Dorsolateral prefrontal cortex (tissue), 120 donors: ENCODE measurements at regions of chr10 and their contacts with region 1.

Region 1: DNA sequence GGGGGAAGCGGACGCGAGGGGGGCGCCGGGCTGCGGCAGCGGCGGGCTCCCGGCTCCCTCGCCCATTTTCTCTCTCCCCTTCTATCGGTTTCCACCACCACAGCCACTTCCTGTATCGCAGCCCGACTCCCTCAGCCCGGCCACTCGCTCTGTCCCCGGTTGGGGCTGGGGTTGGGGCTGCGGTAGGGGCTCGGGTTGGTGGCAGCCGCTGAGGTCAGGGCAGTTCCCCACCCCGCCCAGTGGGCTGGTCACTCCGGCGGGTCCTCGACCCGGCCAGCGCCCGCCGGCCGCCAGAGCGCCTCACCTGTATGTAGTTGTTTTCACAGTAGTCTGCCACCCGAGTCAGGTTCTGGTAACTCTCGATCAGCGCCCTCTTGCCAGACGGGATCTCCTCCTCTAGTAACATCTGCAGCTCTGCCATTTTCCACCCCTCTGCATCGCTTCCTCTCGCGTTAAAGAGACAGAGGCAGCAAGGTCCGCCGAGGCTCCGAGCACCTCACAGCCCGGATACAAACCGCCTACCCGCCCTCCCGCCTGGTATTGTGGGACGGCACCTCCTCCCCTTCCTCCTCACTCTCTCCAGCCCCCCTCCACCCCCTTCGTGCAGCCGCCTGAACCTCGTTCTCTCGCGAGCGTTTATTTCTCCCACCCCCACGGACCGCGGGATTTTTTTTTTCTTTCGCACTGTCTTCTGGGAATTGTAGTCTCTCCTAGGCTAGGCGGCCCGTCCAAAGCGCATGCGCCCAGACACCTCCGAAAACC is at the start of gene ABI1:
- DNase-seq: peak; percentile 92 to 97 (median 96)
- H3K4me3 ChIP-seq: peak within 1 kb of the TSS; percentile 55 to 100 (median 95)
- H3K27ac ChIP-seq: peak within 1 kb of the TSS; percentile 58 to 98 (median 93)
- H3K27me3 ChIP-seq: no peaks in the 10 kb centered on the region
- CTCF ChIP-seq: no peak
- total RNA-seq, gene ABI1: 47.5 to 104 (median 81.1) TPM

Region 2: GRCh38 chr10:26697163-26697921 is 163.3 kb before region 1 on chr10 and contains the start of gene PDSS1:
- intact Hi-C with region 1: loop called (anchors 5 to 10 kb)
- DNase-seq: peak; percentile 46 to 90 (median 70)
- H3K4me3 ChIP-seq: peak within 1 kb of the TSS; percentile 56 to 98 (median 89)
- H3K27ac ChIP-seq: peak within 1 kb of the TSS in 58 of 59 donors; percentile 41 to 98 (median 89)
- H3K27me3 ChIP-seq: peaks cover 0 to 19% (median 0%) of the 10 kb centered on the region in 45 donors
- CTCF ChIP-seq: peak in 16 of 56 donors; percentile 4 to 35 (median 15)
- total RNA-seq, gene PDSS1: 3.1 to 15.8 (median 7.4) TPM

Region 3: GRCh38 chr10:26725837-26726727 is 134.5 kb before region 1 on chr10:
- intact Hi-C with region 1: loop called (anchors 1 to 5 kb)
- DNase-seq: peak in 9 of 10 donors; percentile 49 to 77 (median 67)
- H3K4me3 ChIP-seq: no peak overlapping the region
- H3K27ac ChIP-seq: peak overlapping the region in 46 of 59 donors; percentile 1 to 78 (median 48)
- H3K27me3 ChIP-seq: no peaks in the 10 kb centered on the region
- CTCF ChIP-seq: peak; percentile 75 to 98 (median 88)

Region 4: DNA sequence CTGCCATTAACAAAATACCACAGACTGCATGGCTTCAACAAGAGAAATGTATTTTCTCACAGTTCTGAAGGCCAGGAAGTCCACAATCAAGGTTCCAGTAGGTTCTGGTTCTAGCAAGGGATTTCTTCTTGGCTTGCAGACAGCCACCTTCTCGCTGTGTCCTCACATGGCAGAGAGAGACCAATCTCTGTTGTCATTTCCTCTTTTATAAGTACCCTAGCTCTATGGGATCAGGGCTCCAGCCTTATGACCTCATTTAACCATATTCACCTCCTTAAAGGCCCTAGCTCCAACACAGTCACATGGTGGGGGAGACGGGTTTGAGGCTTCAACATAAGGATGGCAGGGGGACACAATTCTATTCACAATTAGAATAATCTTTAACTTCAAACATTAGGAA is 23.5 kb before region 1 on chr10:
- intact Hi-C with region 1: no loop called
- DNase-seq: no peak
- H3K4me3 ChIP-seq: no peak overlapping the region
- H3K27ac ChIP-seq: no peak overlapping the region
- H3K27me3 ChIP-seq: no peaks in the 10 kb centered on the region
- CTCF ChIP-seq: no peak

Region 5: GRCh38 chr10:27099916-27100812 is 239.5 kb after region 1 on chr10 and contains the start of gene ANKRD26:
- intact Hi-C with region 1: loop called in 1 of 2 experiments (anchors 10 kb)
- DNase-seq: peak; percentile 91 to 96 (median 94)
- H3K4me3 ChIP-seq: peak within 1 kb of the TSS; percentile 64 to 97 (median 86)
- H3K27ac ChIP-seq: peak within 1 kb of the TSS; percentile 55 to 98 (median 91)
- H3K27me3 ChIP-seq: no peaks in the 10 kb centered on the region
- CTCF ChIP-seq: peak in 33 of 56 donors; percentile 4 to 57 (median 37)
- total RNA-seq, gene ANKRD26: 18.9 to 64.2 (median 34.3) TPM

Region 6: DNA sequence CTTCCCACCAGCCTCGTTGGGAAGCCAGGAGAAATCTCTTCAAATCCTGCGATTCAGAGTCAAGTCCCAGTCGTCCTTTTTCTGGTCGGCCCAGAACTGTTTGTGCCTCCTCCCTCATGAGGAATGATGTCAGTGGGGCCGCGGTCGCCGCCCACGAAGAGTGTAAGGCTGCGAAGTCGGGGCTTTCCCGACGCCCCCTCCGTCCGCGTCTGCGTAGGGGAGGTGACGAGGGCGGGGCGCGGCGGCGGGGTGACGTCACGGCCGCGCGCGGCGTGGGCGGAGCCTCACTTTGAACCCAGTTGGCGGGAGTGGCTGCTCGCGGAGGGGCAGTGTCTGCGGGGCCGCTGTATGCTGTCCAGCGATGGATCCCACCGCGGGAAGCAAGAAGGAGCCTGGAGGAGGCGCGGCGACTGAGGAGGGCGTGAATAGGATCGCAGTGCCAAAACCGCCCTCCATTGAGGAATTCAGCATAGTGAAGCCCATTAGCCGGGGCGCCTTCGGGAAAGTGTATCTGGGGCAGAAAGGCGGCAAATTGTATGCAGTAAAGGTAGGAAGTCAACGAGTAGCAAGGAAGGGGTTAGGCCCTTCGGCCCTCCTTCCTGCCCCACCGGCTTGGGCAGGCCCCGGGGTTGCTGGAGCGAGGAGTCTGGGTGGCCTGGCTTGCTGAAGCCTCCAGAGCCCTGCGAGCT is 294.6 kb after region 1 on chr10 and contains the start of gene MASTL:
- intact Hi-C with region 1: loop called (anchors 5 to 10 kb)
- DNase-seq: peak; percentile 82 to 95 (median 90)
- H3K4me3 ChIP-seq: peak within 1 kb of the TSS; percentile 69 to 100 (median 96)
- H3K27ac ChIP-seq: peak within 1 kb of the TSS; percentile 87 to 100 (median 98)
- H3K27me3 ChIP-seq: no peaks in the 10 kb centered on the region
- CTCF ChIP-seq: peak in 5 of 56 donors; percentile 5 to 21 (median 11)
- total RNA-seq, gene MASTL: 2.5 to 7.8 (median 5.4) TPM

Region 7: GRCh38 chr10:27599546-27599945 is 738.9 kb after region 1 on chr10:
- intact Hi-C with region 1: no loop called
- DNase-seq: no peak
- H3K4me3 ChIP-seq: no peak overlapping the region
- H3K27ac ChIP-seq: no peak overlapping the region
- H3K27me3 ChIP-seq: no peaks in the 10 kb centered on the region
- CTCF ChIP-seq: no peak